ENCODE measurements at regions of chr6 and their contacts with region 1.

Region 1: GRCh38 chr6:84967389-84967788 is 203.0 kb upstream of the TBX18 start:
- DNase-seq: peak; percentile 27
- H3K4me3 ChIP-seq: no peak overlapping the region
- H3K27ac ChIP-seq: no peak overlapping the region
- H3K4me1 ChIP-seq: no peaks in the 10 kb centered on the region
- H3K27me3 ChIP-seq: peaks cover 7% of the 10 kb centered on the region
- CTCF ChIP-seq: peak; percentile 61 to 76

Region 2: DNA sequence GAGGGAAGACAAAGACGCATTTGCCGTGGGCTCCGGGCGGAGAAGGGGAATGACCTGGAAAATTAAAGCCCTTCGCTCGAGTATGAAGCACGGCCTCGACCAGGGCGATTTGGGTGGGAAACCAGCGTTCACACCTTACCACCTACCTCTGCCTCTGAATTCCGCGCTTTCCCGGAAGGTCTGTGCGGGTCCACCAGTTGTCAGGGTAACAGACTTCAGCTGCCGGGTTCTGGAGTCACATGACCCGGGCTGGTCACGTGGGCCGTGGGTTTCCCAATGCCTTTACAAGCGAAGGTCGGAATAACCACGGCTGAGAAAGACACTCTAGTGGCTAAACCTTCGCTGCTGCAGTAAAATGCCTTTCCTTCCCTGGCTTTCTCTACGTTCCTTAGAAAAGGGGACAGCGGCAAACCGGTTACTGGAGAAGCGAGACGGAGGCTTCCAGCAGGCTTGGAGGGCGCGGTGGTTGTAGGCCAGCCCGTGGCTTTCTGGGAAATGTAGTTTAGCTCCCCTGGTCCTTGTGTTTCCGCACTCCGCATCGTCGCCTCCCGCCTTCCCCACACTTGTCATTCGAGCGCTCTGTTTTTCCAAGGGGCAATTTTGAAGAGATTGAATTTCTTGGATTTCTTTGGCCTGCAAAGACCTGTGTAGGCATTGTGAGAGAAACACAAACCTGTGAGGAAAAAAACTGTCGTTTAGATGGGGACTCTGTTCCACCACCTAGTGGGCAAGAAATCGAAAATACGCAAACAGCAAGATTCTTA is 739.8 kb before region 1 on chr6 and contains the start of gene CEP162:
- CTCF ChIA-PET with region 1: no interaction called
- dilution Hi-C with region 1: no loop called
- in situ Hi-C with region 1: no loop called
- intact Hi-C with region 1: loop called (anchors 10 kb)
- DNase-seq: peak; percentile 82
- H3K4me3 ChIP-seq: peak within 1 kb of the TSS; percentile 78 to 83 (median 79)
- H3K27ac ChIP-seq: peak within 1 kb of the TSS; percentile 55
- H3K4me1 ChIP-seq: no peaks in the 10 kb centered on the region
- H3K27me3 ChIP-seq: no peaks in the 10 kb centered on the region
- CTCF ChIP-seq: peak; percentile 74 to 75
- total RNA-seq, gene CEP162: 4.3 to 5.0 TPM

Region 3: DNA sequence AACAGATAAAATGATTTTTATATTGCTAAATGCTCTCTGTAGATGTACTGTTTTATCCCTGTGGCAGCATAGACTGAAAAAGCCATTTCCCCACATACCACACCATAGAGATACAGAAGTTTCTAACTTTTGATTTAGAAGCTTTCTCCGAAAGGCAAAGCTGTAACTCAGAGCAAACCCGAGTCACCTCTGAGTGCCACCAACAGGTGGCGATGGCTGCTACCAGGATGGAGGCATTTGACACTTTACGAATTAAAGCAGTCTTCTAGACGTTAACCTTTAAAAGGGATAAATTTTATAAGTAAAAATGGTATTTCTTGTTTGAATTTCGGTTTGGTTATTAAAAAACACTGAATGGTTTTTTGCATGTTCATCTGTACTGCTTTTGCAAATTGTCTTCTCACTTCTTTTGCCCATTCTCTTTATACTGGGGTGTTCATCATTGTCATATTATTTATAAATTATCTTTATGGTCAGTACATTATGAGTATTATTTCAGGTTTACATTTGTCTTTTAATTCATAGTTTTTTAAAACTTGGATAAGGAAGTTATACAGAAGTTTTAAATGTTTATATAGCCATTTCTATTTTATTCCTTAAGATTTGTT is 539.0 kb before region 1 on chr6:
- CTCF ChIA-PET with region 1: no interaction called
- dilution Hi-C with region 1: no loop called
- in situ Hi-C with region 1: loop called (anchors 10 to 25 kb)
- intact Hi-C with region 1: loop called (anchors 1 kb)
- DNase-seq: peak; percentile 24
- H3K4me3 ChIP-seq: no peak overlapping the region
- H3K27ac ChIP-seq: no peak overlapping the region
- H3K4me1 ChIP-seq: no peaks in the 10 kb centered on the region
- H3K27me3 ChIP-seq: peaks cover 7% of the 10 kb centered on the region
- CTCF ChIP-seq: peak; percentile 77 to 87

Region 4: GRCh38 chr6:84728598-84728997 is 238.8 kb before region 1 on chr6:
- CTCF ChIA-PET with region 1: no interaction called
- dilution Hi-C with region 1: no loop called
- in situ Hi-C with region 1: no loop called
- intact Hi-C with region 1: loop called (anchors 1 kb)
- DNase-seq: peak; percentile 45
- H3K4me3 ChIP-seq: no peak overlapping the region
- H3K27ac ChIP-seq: no peak overlapping the region
- H3K4me1 ChIP-seq: peaks cover 7% of the 10 kb centered on the region
- H3K27me3 ChIP-seq: peaks cover 3% of the 10 kb centered on the region
- CTCF ChIP-seq: peak; percentile 55 to 74

Region 5: GRCh38 chr6:85126485-85127167 is 159.2 kb after region 1 on chr6:
- CTCF ChIA-PET with region 1: no interaction called
- dilution Hi-C with region 1: no loop called
- in situ Hi-C with region 1: no loop called
- intact Hi-C with region 1: loop called (anchors 2 kb)
- DNase-seq: peak; percentile 32
- H3K4me3 ChIP-seq: no peak overlapping the region
- H3K27ac ChIP-seq: no peak overlapping the region
- H3K4me1 ChIP-seq: no peaks in the 10 kb centered on the region
- H3K27me3 ChIP-seq: peaks cover 2% of the 10 kb centered on the region
- CTCF ChIP-seq: peak; percentile 64 to 81